Uterus (tissue), 4 donors: ENCODE measurements at regions of chr11 and their contacts with region 1.

Region 1: GRCh38 chr11:67356864-67357561 is 3.7 kb upstream of the POLD4 start:
- DNase-seq: peak; percentile 71 to 74
- H3K4me3 ChIP-seq: no peak overlapping the region
- H3K27ac ChIP-seq: peak overlapping the region; percentile 97 to 99
- H3K4me1 ChIP-seq: peaks cover 24 to 37% of the 10 kb centered on the region in 2 donors
- H3K27me3 ChIP-seq: no peaks in the 10 kb centered on the region
- CTCF ChIP-seq: peak; percentile 90 to 97 (median 94)
- POLR2A ChIP-seq: no peak

Region 2: DNA sequence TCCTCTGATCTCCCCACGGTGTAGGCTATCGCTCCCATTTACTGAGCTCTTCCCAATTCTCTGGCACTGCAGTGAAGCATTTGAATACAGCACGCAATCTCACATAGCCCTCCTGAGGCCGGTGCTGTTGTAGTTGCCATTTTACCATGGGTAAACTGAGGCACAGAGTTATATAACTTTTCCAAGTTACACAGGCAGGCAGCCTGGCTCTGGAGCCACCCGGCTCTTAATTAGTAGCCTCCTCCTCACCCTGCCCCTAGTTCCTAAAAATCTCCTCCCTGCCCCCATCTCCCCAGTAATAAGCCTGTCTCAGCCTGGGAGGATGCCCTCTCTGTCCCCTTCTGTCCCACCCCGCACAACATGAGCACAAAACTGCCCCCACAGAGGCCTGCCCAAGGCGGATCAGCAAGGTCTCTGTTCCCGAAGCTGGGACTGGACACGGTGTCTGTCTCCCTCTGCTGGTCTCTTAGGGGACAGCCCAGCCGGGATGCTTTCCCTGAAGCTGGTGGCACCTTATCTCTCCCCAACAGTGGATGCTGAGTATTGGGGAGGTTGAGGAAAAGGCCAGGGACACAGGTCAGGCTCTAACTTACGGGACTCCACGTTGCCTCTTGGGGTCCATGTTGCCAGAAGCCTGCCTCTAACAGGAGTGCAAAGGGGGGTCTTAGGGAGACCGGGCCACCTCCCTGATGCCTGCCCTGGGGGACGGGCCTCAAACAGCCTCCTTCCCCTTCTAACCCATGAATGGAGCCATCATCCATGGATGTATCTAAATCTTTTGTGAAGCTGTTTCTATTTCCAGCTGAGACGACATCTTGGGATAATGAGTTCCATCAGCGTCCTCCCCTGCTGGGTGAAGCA is 25.5 kb after region 1 on chr11:
- intact Hi-C with region 1: loop called (anchors 2 kb)
- DNase-seq: peak; percentile 83 to 85
- H3K4me3 ChIP-seq: no peak overlapping the region
- H3K27ac ChIP-seq: no peak overlapping the region
- H3K4me1 ChIP-seq: no peaks in the 10 kb centered on the region
- H3K27me3 ChIP-seq: no peaks in the 10 kb centered on the region
- CTCF ChIP-seq: peak; percentile 97 to 98 (median 98)
- POLR2A ChIP-seq: peak in 1 of 2 donors; percentile 28